ENCODE measurements at regions of chr7 and their contacts with region 1.

Region 1: GRCh38 chr7:50793115-50793946 is 10.6 kb upstream of the GRB10 start:
- DNase-seq: peak; percentile 87
- H3K4me3 ChIP-seq: peak overlapping the region; percentile 52 to 78 (median 66)
- H3K27ac ChIP-seq: peak overlapping the region; percentile 78 to 87 (median 86)
- H3K4me1 ChIP-seq: peaks cover 0 to 42% (median 24%) of the 10 kb centered on the region in 4 donors
- H3K27me3 ChIP-seq: no peaks in the 10 kb centered on the region
- CTCF ChIP-seq: no peak
- EP300 ChIP-seq: no peak
- POLR2A ChIP-seq: no peak

Region 2: GRCh38 chr7:50339990-50340500 is 453.3 kb before region 1 on chr7:
- intact Hi-C with region 1: no loop called
- DNase-seq: no peak
- H3K4me3 ChIP-seq: no peak overlapping the region
- H3K27ac ChIP-seq: no peak overlapping the region
- H3K4me1 ChIP-seq: no peaks in the 10 kb centered on the region
- H3K27me3 ChIP-seq: no peaks in the 10 kb centered on the region
- CTCF ChIP-seq: no peak
- EP300 ChIP-seq: no peak
- POLR2A ChIP-seq: no peak

Region 3: DNA sequence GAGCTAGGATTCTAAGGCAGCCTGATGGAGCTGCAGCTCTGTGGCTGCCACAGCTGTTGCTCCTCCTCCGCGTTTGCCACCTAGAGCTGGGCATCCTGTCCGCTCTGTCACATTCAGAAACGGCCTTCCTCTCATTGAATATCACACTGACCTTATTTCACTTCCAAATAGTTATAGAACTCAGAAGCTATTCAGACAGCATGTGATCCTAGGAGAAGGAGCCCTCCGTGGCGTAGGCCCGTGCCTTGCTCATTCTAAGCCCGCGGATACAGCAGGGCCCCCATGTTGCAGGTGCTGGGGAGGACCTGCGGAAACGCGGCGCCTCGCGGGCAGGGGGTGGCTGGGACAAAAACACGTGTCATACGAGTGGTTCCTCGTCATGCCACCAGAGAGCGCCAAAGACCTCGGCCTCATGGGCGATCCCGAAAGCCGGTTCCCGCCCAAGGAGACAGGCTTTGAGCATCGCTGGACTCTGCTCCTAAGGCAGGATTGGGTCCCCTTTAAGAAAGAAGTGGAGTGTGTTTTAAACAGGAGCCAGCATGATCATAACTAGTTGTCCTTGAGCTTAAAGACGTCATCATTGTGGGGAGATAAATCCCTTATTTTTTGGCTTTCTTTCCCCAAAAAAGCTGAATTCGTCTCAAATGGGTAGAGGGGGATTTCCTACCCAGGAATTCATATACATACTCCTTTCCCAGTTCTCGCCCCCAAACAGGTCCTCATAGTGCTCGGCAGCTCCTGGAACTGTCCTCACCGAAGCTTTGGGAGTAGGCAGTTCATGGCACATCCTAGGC is 325.3 kb before region 1 on chr7:
- intact Hi-C with region 1: loop called (anchors 5 kb)
- DNase-seq: peak; percentile 93
- H3K4me3 ChIP-seq: peak overlapping the region in 2 of 4 donors; percentile 16 to 24
- H3K27ac ChIP-seq: peak overlapping the region in 1 of 4 donors; percentile 24
- H3K4me1 ChIP-seq: peaks cover 0 to 13% (median 10%) of the 10 kb centered on the region in 4 donors
- H3K27me3 ChIP-seq: peaks cover 0 to 4% (median 0%) of the 10 kb centered on the region in 3 donors
- CTCF ChIP-seq: peak; percentile 79 to 92 (median 86)
- EP300 ChIP-seq: no peak
- POLR2A ChIP-seq: no peak

Region 4: DNA sequence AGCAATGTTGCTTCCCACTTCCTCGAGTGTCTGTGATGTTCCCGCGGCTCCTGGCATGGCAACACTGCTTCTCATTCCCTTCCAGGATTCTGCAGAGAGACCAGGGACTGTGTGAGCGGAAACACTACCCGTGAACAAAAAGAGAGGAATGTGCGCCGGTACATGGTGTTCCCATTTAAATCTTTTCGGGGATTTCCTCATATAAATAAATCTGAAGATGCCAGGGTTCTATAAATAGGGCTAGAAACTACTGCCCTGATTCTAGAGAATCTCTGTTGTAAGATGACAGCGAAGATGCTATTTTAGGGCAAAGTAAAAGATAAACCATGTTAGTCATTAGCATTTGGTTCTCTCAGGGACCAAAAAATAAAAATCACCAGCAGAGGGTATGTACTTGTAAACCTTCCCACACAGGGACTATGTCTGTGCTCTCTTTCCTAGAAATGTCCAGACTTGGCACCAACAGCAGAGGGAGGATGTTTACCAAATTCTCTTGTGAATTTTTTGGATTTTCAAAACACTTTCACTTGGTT is 135.9 kb before region 1 on chr7:
- intact Hi-C with region 1: loop called (anchors 5 kb)
- DNase-seq: peak; percentile 95
- H3K4me3 ChIP-seq: no peak overlapping the region
- H3K27ac ChIP-seq: peak overlapping the region; percentile 72 to 88 (median 84)
- H3K4me1 ChIP-seq: peaks cover 0 to 73% (median 65%) of the 10 kb centered on the region in 4 donors
- H3K27me3 ChIP-seq: no peaks in the 10 kb centered on the region
- CTCF ChIP-seq: peak in 1 of 4 experiments; percentile 29
- EP300 ChIP-seq: peak; percentile 87 to 99 (median 97)
- POLR2A ChIP-seq: no peak

Region 5: DNA sequence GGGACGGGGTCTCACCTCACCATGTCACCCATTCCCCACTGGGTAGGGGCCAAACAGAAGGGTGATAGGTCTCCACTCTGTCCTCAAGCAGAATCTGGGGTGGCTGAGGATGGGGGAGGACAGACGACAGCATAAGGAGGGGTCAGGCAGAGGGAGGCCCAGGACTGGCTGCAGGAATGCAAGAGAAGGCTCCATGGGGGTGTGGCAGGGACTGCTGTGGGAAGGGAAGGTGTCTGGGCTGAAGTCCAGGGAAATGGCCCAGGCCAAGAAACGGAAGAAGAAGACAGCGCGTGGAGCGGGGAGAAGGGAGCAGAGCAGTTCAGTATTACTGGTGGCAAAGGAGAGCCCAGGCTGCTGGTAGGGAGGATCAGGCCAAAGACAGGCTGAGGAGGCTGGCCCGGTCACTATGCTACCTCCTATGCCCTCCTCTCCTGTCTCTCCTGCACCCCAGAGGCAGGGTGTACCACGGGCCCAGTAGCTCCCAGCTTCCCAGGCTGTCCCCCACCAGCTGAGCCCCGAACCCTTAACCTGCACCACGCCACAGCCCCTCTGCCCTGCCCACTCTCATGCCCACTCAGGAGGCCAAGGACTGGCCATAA is 71.6 kb before region 1 on chr7:
- intact Hi-C with region 1: loop called (anchors 2 kb)
- DNase-seq: no peak
- H3K4me3 ChIP-seq: no peak overlapping the region
- H3K27ac ChIP-seq: peak overlapping the region in 3 of 4 donors; percentile 54 to 66 (median 65)
- H3K4me1 ChIP-seq: peaks cover 0 to 53% (median 43%) of the 10 kb centered on the region in 4 donors
- H3K27me3 ChIP-seq: no peaks in the 10 kb centered on the region
- CTCF ChIP-seq: no peak
- EP300 ChIP-seq: no peak
- POLR2A ChIP-seq: no peak

Region 6: DNA sequence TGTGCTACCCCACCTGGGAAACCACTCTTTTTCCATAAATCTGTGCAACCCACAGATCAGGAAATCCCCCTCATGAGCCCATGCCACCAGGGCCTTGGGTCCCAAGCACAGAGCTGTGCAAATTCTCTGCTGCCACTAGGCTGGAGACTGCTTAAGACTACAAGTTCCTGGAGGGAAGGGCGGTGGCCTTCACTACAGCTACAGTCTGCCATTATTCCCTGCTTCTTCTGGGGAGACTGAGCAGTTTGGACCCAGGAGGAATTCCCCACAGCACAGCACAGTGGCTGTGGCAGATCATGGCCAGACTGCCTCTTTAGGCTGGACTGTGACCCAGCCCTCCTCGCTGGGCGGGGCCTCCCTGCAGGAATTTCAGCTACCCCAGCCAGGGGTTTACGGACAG is 79.1 kb after region 1 on chr7:
- intact Hi-C with region 1: no loop called
- DNase-seq: no peak
- H3K4me3 ChIP-seq: no peak overlapping the region
- H3K27ac ChIP-seq: no peak overlapping the region
- H3K4me1 ChIP-seq: peaks cover 0 to 22% (median 0%) of the 10 kb centered on the region in 4 donors
- H3K27me3 ChIP-seq: no peaks in the 10 kb centered on the region
- CTCF ChIP-seq: no peak
- EP300 ChIP-seq: no peak
- POLR2A ChIP-seq: no peak

Region 7: GRCh38 chr7:50952120-50952519 is 158.8 kb after region 1 on chr7:
- intact Hi-C with region 1: no loop called
- DNase-seq: no peak
- H3K4me3 ChIP-seq: no peak overlapping the region
- H3K27ac ChIP-seq: no peak overlapping the region
- H3K4me1 ChIP-seq: no peaks in the 10 kb centered on the region
- H3K27me3 ChIP-seq: no peaks in the 10 kb centered on the region
- CTCF ChIP-seq: no peak
- EP300 ChIP-seq: no peak
- POLR2A ChIP-seq: no peak

Region 8: GRCh38 chr7:51154201-51154600 is 360.9 kb after region 1 on chr7:
- intact Hi-C with region 1: loop called (anchors 10 kb)
- DNase-seq: no peak
- H3K4me3 ChIP-seq: no peak overlapping the region
- H3K27ac ChIP-seq: no peak overlapping the region
- H3K4me1 ChIP-seq: no peaks in the 10 kb centered on the region
- H3K27me3 ChIP-seq: no peaks in the 10 kb centered on the region
- CTCF ChIP-seq: no peak
- EP300 ChIP-seq: no peak
- POLR2A ChIP-seq: no peak

Measured in sigmoid colon (tissue), 7 donors.